Heart right ventricle (tissue), 16 donors: ENCODE measurements at regions of chr16 and their contacts with region 1.

Region 1: DNA sequence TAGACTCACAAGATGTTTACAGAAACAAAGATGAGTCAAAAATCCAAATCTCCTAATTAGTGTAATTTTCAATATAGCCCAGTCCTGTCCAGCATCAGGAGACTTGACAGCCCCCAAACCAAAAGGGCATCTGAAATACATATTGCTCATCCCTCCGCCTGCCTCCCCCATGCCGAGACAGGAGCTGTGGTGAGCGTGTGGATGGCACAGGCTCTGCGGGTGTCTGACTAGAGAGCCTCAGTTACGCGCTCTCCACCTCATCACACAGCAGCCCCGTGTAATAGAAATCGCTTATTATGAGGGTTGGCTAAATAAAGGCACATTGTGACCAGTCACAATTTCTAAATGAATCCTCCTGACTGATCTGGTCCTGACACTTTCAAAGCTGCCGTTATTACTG is 43.1 kb upstream of the CBLN1 start:
- DNase-seq: no peak
- ATAC-seq: no peak
- H3K4me3 ChIP-seq: no peak overlapping the region
- H3K27ac ChIP-seq: no peak overlapping the region
- H3K4me1 ChIP-seq: no peaks in the 10 kb centered on the region
- H3K27me3 ChIP-seq: peaks cover 0 to 11% (median 6%) of the 10 kb centered on the region in 7 donors
- CTCF ChIP-seq: no peak

Region 2: GRCh38 chr16:49356728-49357488 is 32.2 kb after region 1 on chr16:
- intact Hi-C with region 1: loop called in 1 of 10 experiments (anchors 1 kb)
- DNase-seq: no peak
- ATAC-seq: no peak
- H3K4me3 ChIP-seq: no peak overlapping the region
- H3K27ac ChIP-seq: no peak overlapping the region
- H3K4me1 ChIP-seq: peaks cover 0 to 10% (median 0%) of the 10 kb centered on the region in 9 donors
- H3K27me3 ChIP-seq: peaks cover 0 to 38% (median 7%) of the 10 kb centered on the region in 7 donors
- CTCF ChIP-seq: no peak

Region 3: GRCh38 chr16:49575391-49575790 is 250.7 kb after region 1 on chr16:
- intact Hi-C with region 1: no loop called
- DNase-seq: peak in 1 of 2 donors; percentile 21
- ATAC-seq: peak; percentile 34 to 85 (median 78)
- H3K4me3 ChIP-seq: no peak overlapping the region
- H3K27ac ChIP-seq: peak overlapping the region in 1 of 10 donors; percentile 24
- H3K4me1 ChIP-seq: peaks cover 0 to 19% (median 9%) of the 10 kb centered on the region in 9 donors
- H3K27me3 ChIP-seq: no peaks in the 10 kb centered on the region
- CTCF ChIP-seq: no peak